OCI-LY7 (cell line): ENCODE measurements at regions of chr7 and their contacts with region 1.

Region 1: DNA sequence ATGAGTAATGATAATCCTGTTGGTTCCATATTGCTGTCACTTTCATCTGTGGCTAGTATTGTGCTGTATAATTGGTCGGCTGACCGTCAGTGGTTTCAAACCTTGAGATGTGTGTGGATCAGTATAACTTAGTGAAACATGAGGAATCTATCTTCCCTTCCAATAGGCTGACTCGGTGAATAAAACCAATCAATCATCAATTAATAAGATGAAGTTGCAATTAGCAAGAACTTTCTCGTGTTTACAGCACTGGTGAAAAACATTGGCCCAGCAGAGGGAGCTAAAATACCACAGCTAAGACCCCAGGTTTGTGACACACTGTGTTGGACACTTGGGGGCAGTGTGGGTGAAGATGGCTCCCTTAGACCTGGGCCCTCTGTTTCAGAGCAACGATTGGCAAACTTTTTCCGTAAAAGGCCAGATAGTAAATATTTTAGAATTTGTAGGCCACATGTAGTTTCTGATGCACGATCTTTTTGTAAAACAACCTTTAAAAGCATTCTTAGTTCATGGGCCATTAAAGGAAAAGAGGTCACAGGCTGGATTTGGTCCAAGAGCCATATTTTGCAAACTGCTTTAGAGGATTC is 47.8 kb downstream of the STRA8 start:
- DNase-seq: peak; percentile 87
- H3K4me3 ChIP-seq: no peak overlapping the region
- H3K27ac ChIP-seq: no peak overlapping the region
- H3K4me1 ChIP-seq: no peaks in the 10 kb centered on the region
- CTCF ChIP-seq: peak; percentile 100

Region 2: DNA sequence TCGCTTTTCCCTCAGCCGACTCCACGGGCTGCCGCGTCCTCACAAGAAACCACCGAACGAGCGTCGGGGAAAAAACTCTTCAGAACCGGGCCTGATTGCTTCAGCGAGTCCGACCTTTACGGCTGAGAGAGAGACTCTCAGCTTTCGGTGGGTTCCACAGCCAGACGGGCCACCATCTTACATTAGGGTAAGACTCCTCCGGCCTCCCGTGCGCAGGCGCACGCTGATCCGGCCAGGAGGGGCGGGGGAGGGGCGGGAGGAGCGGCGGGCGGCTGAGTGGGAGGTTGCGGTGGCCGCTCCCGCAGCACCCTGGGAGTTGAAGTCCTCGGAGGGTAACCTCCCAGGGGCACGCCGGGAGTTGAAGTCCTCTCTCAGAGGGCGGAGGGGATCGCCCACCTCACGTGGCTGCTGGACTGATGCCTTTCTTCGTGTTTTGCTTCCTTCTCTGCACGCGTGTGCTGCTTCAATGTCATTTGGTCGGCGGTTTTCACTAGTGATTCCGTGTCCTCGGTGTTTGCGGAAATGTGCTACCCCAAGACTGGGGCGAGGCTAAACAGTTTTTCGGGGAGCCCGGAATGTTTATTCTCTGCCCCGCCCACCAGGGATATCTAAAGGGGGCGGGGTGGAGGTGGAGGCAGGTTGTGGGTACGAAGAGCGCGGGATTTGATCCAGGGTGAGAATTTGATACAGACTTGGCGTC is 228.6 kb after region 1 on chr7 and contains the start of gene CNOT4:
- CTCF ChIA-PET with region 1: no interaction called
- POLR2A ChIA-PET with region 1: no interaction called
- intact Hi-C with region 1: loop called (anchors 2 kb)
- DNase-seq: peak; percentile 97
- H3K4me3 ChIP-seq: peak within 1 kb of the TSS; percentile 97
- H3K27ac ChIP-seq: peak within 1 kb of the TSS; percentile 71
- H3K4me1 ChIP-seq: peaks cover 28% of the 10 kb centered on the region
- CTCF ChIP-seq: no peak
- total RNA-seq, gene CNOT4: 18.7 and 21.8 TPM in 2 replicates

Region 3: DNA sequence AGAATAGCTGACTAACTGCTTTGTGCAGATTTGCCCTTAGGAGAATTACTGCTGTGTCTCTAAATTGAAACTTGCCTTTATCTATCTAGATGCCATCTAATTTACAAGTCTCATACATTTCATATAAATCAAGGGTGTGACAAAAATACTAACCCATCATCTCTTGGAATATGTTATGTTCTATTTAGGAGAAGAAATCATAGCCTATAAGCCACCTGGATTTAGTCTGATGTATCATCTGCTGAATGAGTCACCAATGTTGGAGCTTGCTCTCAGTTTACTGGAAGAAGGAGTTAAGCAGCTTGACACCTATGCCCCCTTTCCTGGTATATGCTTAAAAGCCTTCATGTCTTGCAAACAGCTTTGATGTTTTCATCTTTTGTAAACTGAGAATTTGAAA is 319.7 kb after region 1 on chr7:
- CTCF ChIA-PET with region 1: no interaction called
- POLR2A ChIA-PET with region 1: no interaction called
- intact Hi-C with region 1: loop called (anchors 2 kb)
- DNase-seq: no peak
- H3K4me3 ChIP-seq: no peak overlapping the region
- H3K27ac ChIP-seq: no peak overlapping the region
- H3K4me1 ChIP-seq: no peaks in the 10 kb centered on the region
- CTCF ChIP-seq: no peak

Region 4: GRCh38 chr7:135662373-135663114 is 381.1 kb after region 1 on chr7 and contains the start of gene STMP1:
- CTCF ChIA-PET with region 1: no interaction called
- POLR2A ChIA-PET with region 1: no interaction called
- intact Hi-C with region 1: loop called (anchors 5 kb)
- DNase-seq: peak; percentile 94
- H3K4me3 ChIP-seq: peak within 1 kb of the TSS; percentile 95
- H3K27ac ChIP-seq: peak within 1 kb of the TSS; percentile 37
- H3K4me1 ChIP-seq: peaks cover 19% of the 10 kb centered on the region
- CTCF ChIP-seq: 0 out of 2 replicates have a peak, but pooled peaks have one; percentile 3
- total RNA-seq, gene STMP1: 7.4 and 8.0 TPM in 2 replicates